Endothelial cell of umbilical vein (primary cell): ENCODE measurements at regions of chr17 and their contacts with region 1.

Region 1: GRCh38 chr17:49191917-49192741 is 18.2 kb downstream of the GNGT2 start:
- DNase-seq: peak; percentile 86
- H3K4me3 ChIP-seq: peak overlapping the region; percentile 51 to 67 (median 62)
- H3K27ac ChIP-seq: peak overlapping the region; percentile 62
- H3K4me1 ChIP-seq: peaks cover 8% of the 10 kb centered on the region
- H3K27me3 ChIP-seq: no peaks in the 10 kb centered on the region
- CTCF ChIP-seq: peak; percentile 11 to 37
- POLR2A ChIP-seq: no peak

Region 2: DNA sequence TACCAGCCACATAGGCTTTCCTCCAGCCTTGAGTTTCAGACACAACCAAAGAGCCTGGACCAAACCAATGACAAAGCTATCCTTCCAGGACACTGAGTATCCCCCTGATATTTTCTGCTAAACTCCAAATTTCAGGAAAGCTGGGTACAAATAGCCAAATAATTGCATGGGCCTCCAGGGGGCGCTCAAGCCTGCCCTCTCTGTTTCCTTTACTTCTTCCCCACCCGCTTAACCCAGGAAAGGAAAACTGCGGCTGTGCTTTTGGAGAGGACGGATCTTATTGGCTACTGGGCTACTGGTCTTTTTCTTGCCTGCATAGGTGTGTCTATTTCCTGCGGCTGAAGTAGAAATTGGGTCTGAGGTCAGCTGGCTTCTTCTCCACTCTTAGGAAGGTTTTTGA is 11.8 kb before region 1 on chr17:
- CTCF ChIA-PET with region 1: interaction called, 10 read pairs
- POLR2A ChIA-PET with region 1: interaction called, 8 read pairs
- dilution Hi-C with region 1: no loop called
- intact Hi-C with region 1: no loop called
- DNase-seq: peak; percentile 63
- H3K4me3 ChIP-seq: no peak overlapping the region
- H3K27ac ChIP-seq: no peak overlapping the region
- H3K4me1 ChIP-seq: no peaks in the 10 kb centered on the region
- H3K27me3 ChIP-seq: no peaks in the 10 kb centered on the region
- CTCF ChIP-seq: peak; percentile 90 to 96
- POLR2A ChIP-seq: no peak

Region 3: DNA sequence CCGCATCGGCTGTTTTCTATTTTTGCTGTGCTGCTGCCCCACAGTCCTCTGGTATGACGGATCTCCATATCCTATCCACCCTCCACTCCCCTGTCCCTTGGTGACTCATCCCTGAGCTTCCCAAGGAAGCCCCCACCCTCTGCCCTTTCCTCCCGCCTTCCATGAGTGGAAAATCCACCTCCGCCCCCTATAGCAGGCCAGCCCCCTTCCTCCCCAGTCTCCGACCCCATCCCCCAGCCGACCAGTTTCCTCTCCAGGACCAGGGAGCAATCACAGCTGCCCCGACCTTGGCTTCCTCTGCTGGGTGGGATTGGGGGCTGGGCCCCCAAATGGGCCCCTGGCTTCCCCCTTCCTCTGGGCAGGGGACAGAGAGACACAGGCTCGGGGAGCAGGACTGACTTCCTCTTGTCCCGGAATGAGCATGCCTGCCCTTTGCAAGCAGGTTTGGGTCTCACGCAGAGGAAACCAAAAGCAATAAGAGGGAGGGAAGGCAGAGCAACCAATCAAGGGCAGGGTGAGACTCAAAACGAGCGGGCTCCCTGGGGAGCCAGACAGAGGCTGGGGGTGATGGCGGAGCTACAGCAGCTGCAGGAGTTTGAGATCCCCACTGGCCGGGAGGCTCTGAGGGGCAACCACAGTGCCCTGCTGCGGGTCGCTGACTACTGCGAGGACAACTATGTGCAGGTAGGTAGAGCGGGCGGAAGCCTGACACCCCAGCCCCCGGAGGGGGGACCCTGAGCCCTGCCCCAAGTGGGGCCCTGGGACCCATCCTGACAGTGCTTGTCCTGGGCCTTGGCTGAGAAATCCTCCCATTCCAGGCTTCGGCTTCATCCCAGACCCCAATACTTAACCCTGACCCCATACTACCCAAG is 18.3 kb after region 1 on chr17 and contains the starts of genes ABI3 and GNGT2:
- CTCF ChIA-PET with region 1: interaction called, 11 read pairs
- POLR2A ChIA-PET with region 1: interaction called, 3 read pairs
- dilution Hi-C with region 1: no loop called
- intact Hi-C with region 1: loop called (anchors 1 kb)
- DNase-seq: peak; percentile 87
- H3K4me3 ChIP-seq: peak within 1 kb of the TSS; percentile 47 to 74 (median 59)
- H3K27ac ChIP-seq: peak within 1 kb of the TSS; percentile 73
- H3K4me1 ChIP-seq: peaks cover 62% of the 10 kb centered on the region
- H3K27me3 ChIP-seq: no peaks in the 10 kb centered on the region
- CTCF ChIP-seq: no peak
- POLR2A ChIP-seq: peak; percentile 64
- total RNA-seq, gene ABI3: 35.2 and 35.7 TPM in 2 replicates
- total RNA-seq, gene GNGT2: 3.7 and 3.8 TPM in 2 replicates

Region 4: DNA sequence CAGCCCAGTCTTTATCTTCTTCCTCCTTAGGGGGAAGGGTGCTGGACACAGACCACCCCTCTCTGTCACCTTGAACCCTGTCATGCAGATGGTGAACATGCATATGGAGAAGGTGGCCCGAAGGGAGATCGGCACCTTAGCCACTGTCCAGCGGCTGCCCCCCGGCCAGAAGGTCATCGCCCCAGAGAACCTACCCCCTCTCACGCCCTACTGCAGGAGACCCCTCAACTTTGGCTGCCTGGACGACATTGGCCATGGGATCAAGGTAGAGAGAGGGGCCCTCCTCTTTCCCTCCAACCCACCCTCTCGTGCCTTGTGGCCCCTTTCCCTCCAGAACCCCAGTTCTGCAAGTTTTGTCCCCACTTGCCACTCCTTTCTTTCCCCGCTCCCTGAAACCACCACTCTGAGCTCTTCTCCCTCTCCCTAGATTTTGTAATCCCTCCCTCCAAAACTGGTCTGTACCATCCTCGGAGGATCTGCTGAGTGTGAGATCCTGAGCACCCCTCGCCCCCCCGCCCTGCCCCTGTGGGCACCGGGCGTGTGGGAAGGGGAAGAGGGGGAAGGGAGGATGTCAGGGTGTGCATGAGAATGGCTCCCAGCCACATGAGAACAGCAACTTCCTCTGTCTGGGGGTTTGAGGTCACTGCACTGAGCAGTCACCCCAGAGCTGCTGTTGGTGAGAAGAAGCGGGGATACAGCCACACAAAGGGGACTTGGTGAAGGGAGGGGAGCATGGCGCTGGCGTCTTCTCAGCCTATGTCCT is 25.7 kb after region 1 on chr17:
- CTCF ChIA-PET with region 1: interaction called, 15 read pairs
- POLR2A ChIA-PET with region 1: interaction called, 3 read pairs
- dilution Hi-C with region 1: no loop called
- intact Hi-C with region 1: no loop called
- DNase-seq: no peak
- H3K4me3 ChIP-seq: no peak overlapping the region
- H3K27ac ChIP-seq: no peak overlapping the region
- H3K4me1 ChIP-seq: peaks cover 32% of the 10 kb centered on the region
- H3K27me3 ChIP-seq: no peaks in the 10 kb centered on the region
- CTCF ChIP-seq: no peak
- POLR2A ChIP-seq: no peak

Region 5: DNA sequence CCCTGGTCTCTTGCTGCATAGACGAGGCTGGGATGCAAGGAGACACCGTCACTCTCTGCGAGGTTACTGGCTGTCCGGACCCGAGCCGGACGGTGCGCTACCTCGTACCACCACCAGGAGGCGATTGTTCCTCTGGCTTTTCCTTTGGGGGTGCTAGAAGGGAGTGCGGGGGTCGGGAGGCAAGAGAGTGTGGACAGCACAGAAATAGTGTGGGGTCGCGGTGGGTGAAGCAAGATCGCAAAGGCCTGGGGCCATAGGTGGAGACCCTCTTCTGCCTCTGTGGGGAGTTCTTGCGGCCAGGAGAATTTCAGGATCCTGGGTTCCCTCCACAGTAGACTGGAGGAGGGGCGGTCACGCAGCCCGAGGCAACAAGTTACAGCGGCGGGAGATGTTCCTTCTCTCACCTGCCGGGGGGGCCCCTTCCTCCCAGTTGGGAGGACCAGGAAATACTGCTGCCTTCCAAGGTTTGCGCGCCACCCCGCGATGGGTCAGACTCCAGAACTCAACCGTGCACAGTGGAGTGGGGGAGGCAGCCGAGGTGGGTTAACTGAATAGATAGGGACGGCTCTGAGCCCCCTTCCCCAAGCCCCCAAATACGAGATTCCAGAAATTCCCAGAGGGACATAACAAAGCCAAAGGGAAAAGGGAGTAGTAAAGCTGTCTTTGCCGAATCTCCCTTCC is 31.5 kb after region 1 on chr17:
- CTCF ChIA-PET with region 1: interaction called, 212 read pairs
- POLR2A ChIA-PET with region 1: no interaction called
- dilution Hi-C with region 1: no loop called
- intact Hi-C with region 1: no loop called
- DNase-seq: no peak
- H3K4me3 ChIP-seq: no peak overlapping the region
- H3K27ac ChIP-seq: no peak overlapping the region
- H3K4me1 ChIP-seq: peaks cover 11% of the 10 kb centered on the region
- H3K27me3 ChIP-seq: peaks cover 16 to 22% of the 10 kb centered on the region in 2 experiments
- CTCF ChIP-seq: peak; percentile 78 to 83
- POLR2A ChIP-seq: no peak

Region 6: GRCh38 chr17:49230636-49231562 is 38.8 kb after region 1 on chr17 and contains the start of gene PHOSPHO1:
- CTCF ChIA-PET with region 1: interaction called, 212 read pairs
- POLR2A ChIA-PET with region 1: no interaction called
- dilution Hi-C with region 1: no loop called
- intact Hi-C with region 1: loop called (anchors 1 kb)
- DNase-seq: peak; percentile 85
- H3K4me3 ChIP-seq: peak within 1 kb of the TSS; percentile 42 to 60 (median 49)
- H3K27ac ChIP-seq: no peak within 1 kb of the TSS
- H3K4me1 ChIP-seq: peaks cover 10% of the 10 kb centered on the region
- H3K27me3 ChIP-seq: peaks cover 0 to 4% of the 10 kb centered on the region in 2 experiments
- CTCF ChIP-seq: no peak
- POLR2A ChIP-seq: no peak
- total RNA-seq, gene PHOSPHO1: 0.18 TPM in 1 of 2 replicates, not detected in the other

Region 7: DNA sequence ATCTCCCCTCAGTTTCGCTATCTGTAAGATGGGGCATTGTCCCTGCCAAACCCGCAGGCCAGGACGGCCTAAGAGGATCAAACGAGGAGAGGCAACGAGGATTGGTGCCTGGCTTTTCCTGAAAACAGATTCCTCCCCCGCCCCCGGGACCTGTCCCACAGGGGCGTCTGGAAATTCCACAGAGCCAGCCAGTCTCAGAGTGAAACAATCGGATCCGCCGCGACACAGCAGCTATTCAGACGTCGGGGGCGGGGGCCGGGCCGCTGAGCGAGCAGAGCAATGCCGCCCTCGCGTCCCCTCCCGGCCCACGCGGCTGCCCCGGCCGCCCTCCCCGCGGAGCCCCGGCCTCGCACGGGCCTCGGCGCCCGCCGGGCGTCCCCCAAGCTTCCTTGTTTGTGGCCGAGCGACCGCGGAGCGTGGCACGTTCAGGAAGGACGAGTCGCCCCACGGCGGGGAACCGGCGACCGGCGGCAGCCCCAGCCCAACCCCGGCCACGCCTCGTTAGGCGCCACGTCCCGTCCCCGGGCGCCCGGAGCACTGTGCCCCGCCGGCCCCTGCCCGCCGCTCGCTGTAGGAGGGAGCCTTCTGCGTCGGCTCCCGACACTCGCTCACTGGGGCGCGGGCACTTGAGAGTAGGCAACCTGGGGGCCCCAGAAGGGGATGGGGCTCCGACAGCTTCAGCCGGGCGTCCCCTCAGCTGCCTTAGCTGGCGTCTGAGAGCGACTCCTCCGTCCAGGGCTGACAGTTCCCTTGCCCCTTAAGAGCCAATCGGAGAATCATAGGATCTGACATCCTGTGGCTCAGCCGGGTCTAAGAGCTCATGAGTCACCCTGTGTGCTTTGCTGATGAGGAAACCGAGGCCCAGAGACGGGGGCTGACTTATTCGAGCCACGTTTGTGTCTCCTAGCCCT is 68.1 kb after region 1 on chr17:
- CTCF ChIA-PET with region 1: interaction called, 5 read pairs
- POLR2A ChIA-PET with region 1: no interaction called
- dilution Hi-C with region 1: no loop called
- intact Hi-C with region 1: loop called (anchors 1 kb)
- DNase-seq: peak; percentile 87
- H3K4me3 ChIP-seq: peak overlapping the region; percentile 43 to 51 (median 51)
- H3K27ac ChIP-seq: peak overlapping the region; percentile 85
- H3K4me1 ChIP-seq: peaks cover 14% of the 10 kb centered on the region
- H3K27me3 ChIP-seq: no peaks in the 10 kb centered on the region
- CTCF ChIP-seq: no peak
- POLR2A ChIP-seq: peak; percentile 76